ENCODE measurements at regions of chr21 and their contacts with region 1.

Region 1: GRCh38 chr21:38805328-38806152 is at the start of gene ETS2:
- DNase-seq: peak; percentile 81
- H3K4me3 ChIP-seq: peak within 1 kb of the TSS; percentile 93 to 98 (median 97)
- H3K27ac ChIP-seq: peak within 1 kb of the TSS; percentile 74
- H3K4me1 ChIP-seq: peaks cover 35% of the 10 kb centered on the region
- H3K27me3 ChIP-seq: no peaks in the 10 kb centered on the region
- CTCF ChIP-seq: no peak
- POLR2A ChIP-seq: peak; percentile 85
- total RNA-seq, gene ETS2: 42.1 and 54.5 TPM in 2 replicates

Region 2: GRCh38 chr21:38669176-38669575 is 136.4 kb before region 1 on chr21:
- CTCF ChIA-PET with region 1: interaction called, 10 read pairs
- POLR2A ChIA-PET with region 1: no interaction called
- dilution Hi-C with region 1: no loop called
- intact Hi-C with region 1: no loop called
- DNase-seq: peak; percentile 45
- H3K4me3 ChIP-seq: no peak overlapping the region
- H3K27ac ChIP-seq: no peak overlapping the region
- H3K4me1 ChIP-seq: no peaks in the 10 kb centered on the region
- H3K27me3 ChIP-seq: peaks cover 33 to 36% of the 10 kb centered on the region in 2 experiments
- CTCF ChIP-seq: peak; percentile 36 to 52
- POLR2A ChIP-seq: no peak

Region 3: DNA sequence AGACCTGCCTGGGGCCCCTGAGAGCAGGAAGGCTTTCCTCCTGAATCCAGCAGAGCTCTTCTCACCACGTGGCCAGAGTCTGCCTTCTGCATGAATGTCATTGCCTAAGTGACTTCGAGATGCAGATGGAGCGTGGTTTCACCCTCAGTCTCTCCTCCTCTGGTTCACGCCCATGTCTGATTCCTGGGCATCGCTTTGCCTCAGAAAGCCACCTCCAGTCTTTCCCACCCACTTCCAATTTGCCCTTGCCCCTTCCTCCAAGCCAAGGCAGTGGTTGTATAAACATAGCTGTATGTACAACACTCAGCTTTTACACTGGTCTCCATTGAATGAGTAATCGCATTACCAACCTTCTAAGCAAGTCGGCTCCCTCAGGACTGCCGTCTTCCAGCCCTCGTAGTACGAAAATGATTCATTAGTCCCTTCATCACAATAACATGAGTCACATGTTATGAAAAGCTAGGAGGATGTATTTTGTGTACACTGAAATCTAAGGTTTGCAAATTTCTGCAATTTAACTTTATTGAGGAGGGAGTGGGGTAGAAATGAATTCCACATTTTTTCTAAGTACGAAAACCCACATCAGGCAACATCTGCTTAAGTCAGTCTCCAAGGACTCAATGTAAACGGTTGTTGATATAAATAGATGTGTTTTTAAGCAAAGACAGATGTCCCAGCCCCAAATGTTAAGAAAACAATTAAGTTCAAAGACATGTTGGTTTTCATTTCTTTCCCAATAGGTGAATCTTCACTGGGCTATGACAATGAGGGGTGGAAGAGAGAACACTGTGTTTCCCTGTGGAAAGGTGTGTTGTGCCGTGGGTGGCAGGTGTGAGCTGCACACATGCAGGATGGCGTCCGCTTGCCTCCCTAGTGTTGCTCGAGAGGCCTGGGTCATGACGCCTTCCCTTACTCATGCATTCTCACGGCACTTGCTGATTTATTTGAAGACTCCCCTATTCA is 32.2 kb before region 1 on chr21:
- CTCF ChIA-PET with region 1: no interaction called
- POLR2A ChIA-PET with region 1: no interaction called
- dilution Hi-C with region 1: no loop called
- intact Hi-C with region 1: loop called (anchors 2 kb)
- DNase-seq: peak; percentile 91
- H3K4me3 ChIP-seq: no peak overlapping the region
- H3K27ac ChIP-seq: peak overlapping the region; percentile 45
- H3K4me1 ChIP-seq: peaks cover 17% of the 10 kb centered on the region
- H3K27me3 ChIP-seq: no peaks in the 10 kb centered on the region
- CTCF ChIP-seq: no peak
- POLR2A ChIP-seq: no peak

Region 4: GRCh38 chr21:38875694-38876492 is 70.4 kb after region 1 on chr21:
- CTCF ChIA-PET with region 1: no interaction called
- POLR2A ChIA-PET with region 1: no interaction called
- dilution Hi-C with region 1: no loop called
- intact Hi-C with region 1: no loop called
- DNase-seq: no peak
- H3K4me3 ChIP-seq: no peak overlapping the region
- H3K27ac ChIP-seq: no peak overlapping the region
- H3K4me1 ChIP-seq: no peaks in the 10 kb centered on the region
- H3K27me3 ChIP-seq: peaks cover 0 to 2% of the 10 kb centered on the region in 2 experiments
- CTCF ChIP-seq: no peak
- POLR2A ChIP-seq: no peak

Region 5: GRCh38 chr21:38897532-38898422 is 92.2 kb after region 1 on chr21:
- CTCF ChIA-PET with region 1: no interaction called
- POLR2A ChIA-PET with region 1: no interaction called
- dilution Hi-C with region 1: no loop called
- intact Hi-C with region 1: loop called (anchors 5 kb)
- DNase-seq: no peak
- H3K4me3 ChIP-seq: no peak overlapping the region
- H3K27ac ChIP-seq: no peak overlapping the region
- H3K4me1 ChIP-seq: peaks cover 4% of the 10 kb centered on the region
- H3K27me3 ChIP-seq: no peaks in the 10 kb centered on the region
- CTCF ChIP-seq: no peak
- POLR2A ChIP-seq: no peak

Region 6: DNA sequence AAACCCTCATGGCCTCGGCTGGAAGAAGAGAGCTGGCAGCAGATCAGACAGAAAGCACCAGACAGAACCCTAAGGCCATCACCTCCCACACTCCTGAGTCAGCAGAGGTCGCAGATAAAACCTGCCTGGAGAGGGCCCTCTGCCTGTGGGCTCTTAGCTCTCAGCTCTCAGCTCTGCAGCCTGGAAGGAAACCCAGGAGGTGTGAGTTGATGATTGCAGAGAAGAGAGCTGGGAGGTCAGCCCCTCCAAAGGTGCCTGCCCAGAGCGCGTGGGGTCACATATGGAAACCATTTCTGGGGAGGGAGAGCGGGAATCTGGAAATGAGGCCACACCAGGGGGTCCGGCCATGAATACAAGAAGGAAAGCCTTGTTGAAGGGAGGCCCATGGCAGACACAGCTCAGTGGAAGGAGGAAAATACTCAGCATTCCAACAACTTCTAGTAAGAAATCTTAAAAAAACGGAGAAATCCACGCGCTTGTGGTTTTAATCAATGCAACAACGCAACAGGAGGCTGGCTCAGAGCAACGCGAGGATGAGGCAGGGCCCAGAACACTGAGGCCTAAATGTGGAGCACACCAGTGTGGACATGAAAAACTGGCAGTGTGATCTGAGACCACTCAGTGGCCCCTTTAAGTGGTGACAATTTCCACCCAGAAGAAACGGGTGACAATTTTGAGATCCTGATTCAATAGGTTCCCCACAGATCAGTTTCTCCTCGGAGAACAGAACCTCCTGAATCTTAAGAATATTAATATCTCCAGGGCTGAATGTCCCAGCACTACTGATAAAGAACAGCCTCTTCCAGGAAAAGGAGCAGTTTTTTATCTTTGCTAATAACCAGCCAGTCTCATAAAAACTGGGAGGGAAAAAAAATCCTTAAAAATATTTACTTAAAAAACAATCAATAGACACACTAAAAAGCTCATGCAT is 332.0 kb after region 1 on chr21:
- CTCF ChIA-PET with region 1: interaction called, 17 read pairs
- POLR2A ChIA-PET with region 1: no interaction called
- dilution Hi-C with region 1: no loop called
- intact Hi-C with region 1: no loop called
- DNase-seq: no peak
- H3K4me3 ChIP-seq: no peak overlapping the region
- H3K27ac ChIP-seq: no peak overlapping the region
- H3K4me1 ChIP-seq: no peaks in the 10 kb centered on the region
- H3K27me3 ChIP-seq: no peaks in the 10 kb centered on the region
- CTCF ChIP-seq: no peak
- POLR2A ChIP-seq: no peak

Measured in endothelial cell of umbilical vein (primary cell).